Mammary epithelial cell (primary cell): ENCODE measurements at regions of chr17 and their contacts with region 1.

Region 1: GRCh38 chr17:979538-980405 is at the start of gene NXN:
- DNase-seq: peak; percentile 71
- H3K4me3 ChIP-seq: peak within 1 kb of the TSS; percentile 69 to 93 (median 90)
- H3K27ac ChIP-seq: peak within 1 kb of the TSS; percentile 79
- H3K4me1 ChIP-seq: peaks cover 25% of the 10 kb centered on the region
- H3K27me3 ChIP-seq: no peaks in the 10 kb centered on the region
- CTCF ChIP-seq: peak in 1 of 2 donors; percentile 43
- total RNA-seq, gene NXN: 126 to 128 TPM

Region 2: GRCh38 chr17:143782-144281 is 835.9 kb before region 1 on chr17:
- CTCF ChIA-PET with region 1: no interaction called
- dilution Hi-C with region 1: no loop called
- in situ Hi-C with region 1: no loop called
- intact Hi-C with region 1: loop called (anchors 5 kb)
- DNase-seq: peak; percentile 61
- H3K4me3 ChIP-seq: no peak overlapping the region
- H3K27ac ChIP-seq: no peak overlapping the region
- H3K4me1 ChIP-seq: no peaks in the 10 kb centered on the region
- H3K27me3 ChIP-seq: no peaks in the 10 kb centered on the region
- CTCF ChIP-seq: peak; percentile 26 to 66

Region 3: GRCh38 chr17:716238-716637 is 263.5 kb before region 1 on chr17:
- CTCF ChIA-PET with region 1: no interaction called
- dilution Hi-C with region 1: no loop called
- in situ Hi-C with region 1: no loop called
- intact Hi-C with region 1: loop called (anchors 1 kb)
- DNase-seq: no peak
- H3K4me3 ChIP-seq: no peak overlapping the region
- H3K27ac ChIP-seq: no peak overlapping the region
- H3K4me1 ChIP-seq: peaks cover 7% of the 10 kb centered on the region
- H3K27me3 ChIP-seq: no peaks in the 10 kb centered on the region
- CTCF ChIP-seq: no peak

Region 4: DNA sequence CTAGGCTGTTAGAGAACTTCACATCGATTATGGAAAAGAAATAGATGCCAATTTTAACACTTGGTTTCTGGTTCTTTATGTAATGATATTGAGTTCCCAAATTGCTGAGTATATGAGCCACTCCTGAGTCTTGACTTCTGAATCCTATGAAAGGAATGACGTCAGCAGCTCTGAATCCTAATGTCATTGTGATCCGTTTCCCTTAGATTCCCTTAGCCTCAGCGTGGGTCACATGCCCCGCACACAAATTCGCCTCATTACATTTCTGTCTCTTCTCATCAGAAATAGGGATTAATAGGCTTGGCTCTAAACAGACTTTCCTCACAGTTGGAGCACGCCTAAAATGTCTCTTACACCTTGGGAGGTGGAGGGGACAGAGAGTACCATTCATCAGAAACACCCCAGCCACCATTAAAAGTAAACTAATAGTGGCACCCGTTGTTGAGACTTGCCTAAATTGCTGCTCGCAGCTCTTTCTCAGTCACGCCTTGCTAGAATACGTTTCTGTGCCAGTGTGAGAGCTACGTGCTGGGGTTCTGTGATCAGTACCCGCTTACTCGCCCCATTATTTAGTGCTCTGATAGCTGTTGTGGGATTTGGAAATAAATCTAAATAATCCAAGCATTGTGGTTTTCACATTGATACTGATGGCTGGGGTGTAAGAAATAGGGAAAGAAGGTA is 190.5 kb before region 1 on chr17:
- CTCF ChIA-PET with region 1: interaction called, 5 read pairs
- dilution Hi-C with region 1: no loop called
- in situ Hi-C with region 1: loop called (anchors 5 kb)
- intact Hi-C with region 1: no loop called
- DNase-seq: no peak
- H3K4me3 ChIP-seq: peak overlapping the region; percentile 14 to 40 (median 38)
- H3K27ac ChIP-seq: peak overlapping the region; percentile 80
- H3K4me1 ChIP-seq: peaks cover 31% of the 10 kb centered on the region
- H3K27me3 ChIP-seq: no peaks in the 10 kb centered on the region
- CTCF ChIP-seq: no peak

Region 5: GRCh38 chr17:879549-880442 is 100.0 kb before region 1 on chr17:
- CTCF ChIA-PET with region 1: interaction called, 14 read pairs
- dilution Hi-C with region 1: no loop called
- in situ Hi-C with region 1: loop called in 1 of 2 experiments (anchors 10 kb)
- intact Hi-C with region 1: loop called (anchors 1 kb)
- DNase-seq: peak; percentile 91
- H3K4me3 ChIP-seq: no peak overlapping the region
- H3K27ac ChIP-seq: peak overlapping the region; percentile 72
- H3K4me1 ChIP-seq: peaks cover 25% of the 10 kb centered on the region
- H3K27me3 ChIP-seq: no peaks in the 10 kb centered on the region
- CTCF ChIP-seq: peak; percentile 54 to 65

Region 6: GRCh38 chr17:944266-944826 is 35.4 kb before region 1 on chr17:
- CTCF ChIA-PET with region 1: no interaction called
- dilution Hi-C with region 1: loop called (anchors 5 kb)
- in situ Hi-C with region 1: no loop called
- intact Hi-C with region 1: no loop called
- DNase-seq: no peak
- H3K4me3 ChIP-seq: no peak overlapping the region
- H3K27ac ChIP-seq: no peak overlapping the region
- H3K4me1 ChIP-seq: peaks cover 4% of the 10 kb centered on the region
- H3K27me3 ChIP-seq: no peaks in the 10 kb centered on the region
- CTCF ChIP-seq: no peak